CD4-positive, alpha-beta T cell (primary cell): ENCODE measurements at regions of chr15 and their contacts with region 1.

Region 1: GRCh38 chr15:70488002-70488605 is 275.3 kb downstream of the UACA start:
- DNase-seq: peak; percentile 51 to 86 (median 67)
- ATAC-seq: no peak
- H3K4me3 ChIP-seq: no peak overlapping the region
- H3K4me3 Mint-ChIP-seq: no peak overlapping the region
- H3K27ac ChIP-seq: no peak overlapping the region
- H3K27ac Mint-ChIP-seq: no peak overlapping the region
- H3K4me1 ChIP-seq: peaks cover 63% of the 10 kb centered on the region
- H3K4me1 Mint-ChIP-seq: peaks cover 61% of the 10 kb centered on the region
- H3K27me3 ChIP-seq: peaks cover 0 to 4% of the 10 kb centered on the region in 2 experiments
- H3K27me3 Mint-ChIP-seq: no peaks in the 10 kb centered on the region
- CTCF ChIP-seq: peak; percentile 92

Region 2: DNA sequence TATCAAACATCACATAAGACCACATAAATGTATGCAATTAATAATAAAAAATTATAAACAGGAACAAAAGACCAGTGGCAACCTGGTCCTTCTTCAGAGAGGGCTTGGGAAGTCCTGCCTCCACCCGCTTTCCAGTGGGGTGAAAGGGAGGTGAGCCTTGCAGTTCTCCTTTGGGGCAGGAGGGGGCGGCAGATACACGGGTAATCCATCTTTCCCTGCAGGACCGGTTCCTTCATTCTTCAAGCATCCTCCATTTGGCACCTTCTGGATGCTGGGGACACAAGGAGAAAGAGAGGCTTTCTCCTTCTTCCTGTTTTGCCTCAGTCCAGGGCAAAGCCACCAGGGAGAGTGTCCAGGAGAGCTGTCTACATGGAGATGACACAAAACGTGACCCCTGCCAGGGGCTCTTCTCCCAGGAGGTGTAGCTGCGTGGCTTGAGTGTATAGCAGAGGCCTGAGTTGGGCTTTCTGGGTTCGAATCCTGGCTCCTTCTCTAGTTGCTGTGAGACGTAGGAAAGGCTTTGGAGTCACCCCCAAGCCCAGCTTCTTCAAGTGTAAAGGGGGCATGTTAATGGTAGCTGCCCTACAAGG is 1012.2 kb before region 1 on chr15:
- CTCF ChIA-PET with region 1: interaction called, 3 read pairs
- POLR2A ChIA-PET with region 1: no interaction called
- intact Hi-C with region 1: loop called (anchors 1 to 2 kb)
- DNase-seq: peak; percentile 55 to 85 (median 70)
- ATAC-seq: peak; percentile 95
- H3K4me3 ChIP-seq: no peak overlapping the region
- H3K4me3 Mint-ChIP-seq: no peak overlapping the region
- H3K27ac ChIP-seq: no peak overlapping the region
- H3K27ac Mint-ChIP-seq: no peak overlapping the region
- H3K4me1 ChIP-seq: peaks cover 10% of the 10 kb centered on the region
- H3K4me1 Mint-ChIP-seq: peaks cover 3% of the 10 kb centered on the region
- H3K27me3 ChIP-seq: peaks cover 0 to 2% of the 10 kb centered on the region in 2 experiments
- H3K27me3 Mint-ChIP-seq: no peaks in the 10 kb centered on the region
- CTCF ChIP-seq: peak; percentile 97

Region 3: GRCh38 chr15:69576035-69576526 is 912.0 kb before region 1 on chr15:
- CTCF ChIA-PET with region 1: no interaction called
- POLR2A ChIA-PET with region 1: no interaction called
- intact Hi-C with region 1: loop called (anchors 1 kb)
- DNase-seq: peak; percentile 44 to 81 (median 69)
- ATAC-seq: peak; percentile 76
- H3K4me3 ChIP-seq: no peak overlapping the region
- H3K4me3 Mint-ChIP-seq: no peak overlapping the region
- H3K27ac ChIP-seq: no peak overlapping the region
- H3K27ac Mint-ChIP-seq: no peak overlapping the region
- H3K4me1 ChIP-seq: peaks cover 34% of the 10 kb centered on the region
- H3K4me1 Mint-ChIP-seq: peaks cover 33% of the 10 kb centered on the region
- H3K27me3 ChIP-seq: no peaks in the 10 kb centered on the region
- H3K27me3 Mint-ChIP-seq: no peaks in the 10 kb centered on the region
- CTCF ChIP-seq: peak; percentile 78

Region 4: GRCh38 chr15:70474471-70475396 is 13.4 kb before region 1 on chr15:
- CTCF ChIA-PET with region 1: interaction called, 5 read pairs
- POLR2A ChIA-PET with region 1: interaction called, 10 read pairs
- intact Hi-C with region 1: no loop called
- DNase-seq: peak in 6 of 14 experiments; percentile 26 to 71 (median 61)
- ATAC-seq: peak; percentile 70
- H3K4me3 ChIP-seq: peak overlapping the region; percentile 35
- H3K4me3 Mint-ChIP-seq: peak overlapping the region; percentile 79
- H3K27ac ChIP-seq: no peak overlapping the region
- H3K27ac Mint-ChIP-seq: peak overlapping the region; percentile 9
- H3K4me1 ChIP-seq: peaks cover 42% of the 10 kb centered on the region
- H3K4me1 Mint-ChIP-seq: peaks cover 38% of the 10 kb centered on the region
- H3K27me3 ChIP-seq: peaks cover 0 to 3% of the 10 kb centered on the region in 2 experiments
- H3K27me3 Mint-ChIP-seq: peaks cover 6% of the 10 kb centered on the region
- CTCF ChIP-seq: no peak

Region 5: GRCh38 chr15:70512772-70513362 is 24.8 kb after region 1 on chr15:
- CTCF ChIA-PET with region 1: interaction called, 3 read pairs
- POLR2A ChIA-PET with region 1: interaction called, 13 read pairs
- intact Hi-C with region 1: no loop called
- DNase-seq: peak; percentile 36 to 83 (median 56)
- ATAC-seq: peak; percentile 98
- H3K4me3 ChIP-seq: no peak overlapping the region
- H3K4me3 Mint-ChIP-seq: no peak overlapping the region
- H3K27ac ChIP-seq: no peak overlapping the region
- H3K27ac Mint-ChIP-seq: no peak overlapping the region
- H3K4me1 ChIP-seq: peaks cover 25% of the 10 kb centered on the region
- H3K4me1 Mint-ChIP-seq: peaks cover 12% of the 10 kb centered on the region
- H3K27me3 ChIP-seq: no peaks in the 10 kb centered on the region
- H3K27me3 Mint-ChIP-seq: no peaks in the 10 kb centered on the region
- CTCF ChIP-seq: peak; percentile 74

Region 6: DNA sequence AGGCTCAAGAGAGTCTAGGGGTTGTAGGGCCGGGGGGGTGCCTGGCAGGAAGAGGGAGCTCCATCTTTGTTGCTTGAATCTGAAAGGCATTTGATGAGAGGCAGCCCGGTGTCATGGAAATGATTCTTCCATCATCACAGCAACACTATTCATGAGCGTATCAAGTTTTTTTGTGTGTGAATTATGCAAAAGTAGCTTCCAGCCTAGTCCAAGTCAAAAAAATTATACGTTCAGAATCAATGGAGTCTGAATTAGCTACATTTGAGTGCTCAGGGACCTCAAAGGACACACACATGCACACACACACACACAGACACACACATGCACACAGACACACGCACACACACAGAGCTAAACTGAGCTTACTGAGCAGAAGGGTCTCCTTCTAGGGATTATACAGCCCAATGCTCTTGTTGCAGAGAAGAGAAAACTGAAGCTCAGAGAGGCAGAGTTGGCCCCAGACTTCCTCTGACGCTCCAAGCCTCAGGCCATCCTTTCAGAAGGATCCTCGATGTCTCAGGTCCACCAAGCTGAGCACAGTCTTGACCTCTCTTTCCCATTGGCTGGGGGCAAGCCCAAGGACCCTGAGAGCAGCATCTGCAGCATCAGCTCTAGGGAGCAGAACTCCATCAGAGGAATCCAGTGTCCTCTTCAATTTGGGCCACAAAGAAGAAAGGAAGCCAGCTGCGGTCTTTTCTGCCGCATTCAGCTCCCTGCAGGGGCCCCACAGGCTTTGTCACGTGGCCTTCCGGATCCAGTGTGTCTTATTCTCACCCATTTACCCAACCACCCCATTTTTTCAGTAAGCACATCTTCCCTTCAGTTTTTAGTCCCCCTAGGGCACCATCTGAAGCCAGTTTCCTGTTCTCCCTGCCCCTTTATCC is 47.2 kb after region 1 on chr15:
- CTCF ChIA-PET with region 1: interaction called, 4 read pairs
- POLR2A ChIA-PET with region 1: interaction called, 34 read pairs
- intact Hi-C with region 1: no loop called
- DNase-seq: peak; percentile 35 to 84 (median 58)
- ATAC-seq: peak; percentile 76
- H3K4me3 ChIP-seq: peak overlapping the region; percentile 61
- H3K4me3 Mint-ChIP-seq: peak overlapping the region; percentile 93
- H3K27ac ChIP-seq: peak overlapping the region; percentile 65
- H3K27ac Mint-ChIP-seq: peak overlapping the region; percentile 98
- H3K4me1 ChIP-seq: peaks cover 69% of the 10 kb centered on the region
- H3K4me1 Mint-ChIP-seq: peaks cover 78% of the 10 kb centered on the region
- H3K27me3 ChIP-seq: no peaks in the 10 kb centered on the region
- H3K27me3 Mint-ChIP-seq: no peaks in the 10 kb centered on the region
- CTCF ChIP-seq: no peak

Region 7: GRCh38 chr15:70584838-70585706 is 97.0 kb after region 1 on chr15:
- CTCF ChIA-PET with region 1: no interaction called
- POLR2A ChIA-PET with region 1: interaction called, 4 read pairs
- intact Hi-C with region 1: loop called in 1 of 2 experiments (anchors 5 kb)
- DNase-seq: peak; percentile 24 to 73 (median 46)
- ATAC-seq: peak; percentile 86
- H3K4me3 ChIP-seq: no peak overlapping the region
- H3K4me3 Mint-ChIP-seq: peak overlapping the region; percentile 68
- H3K27ac ChIP-seq: no peak overlapping the region
- H3K27ac Mint-ChIP-seq: no peak overlapping the region
- H3K4me1 ChIP-seq: peaks cover 16% of the 10 kb centered on the region
- H3K4me1 Mint-ChIP-seq: peaks cover 21% of the 10 kb centered on the region
- H3K27me3 ChIP-seq: peaks cover 0 to 5% of the 10 kb centered on the region in 2 experiments
- H3K27me3 Mint-ChIP-seq: peaks cover 15% of the 10 kb centered on the region
- CTCF ChIP-seq: peak; percentile 76